Left ventricle myocardium superior (tissue), 1 donor: ENCODE measurements at regions of chr4 and their contacts with region 1.

Region 1: GRCh38 chr4:152385551-152385950 is 150.3 kb downstream of the FBXW7 start:
- DNase-seq: no peak
- ATAC-seq: peak; percentile 25

Region 2: DNA sequence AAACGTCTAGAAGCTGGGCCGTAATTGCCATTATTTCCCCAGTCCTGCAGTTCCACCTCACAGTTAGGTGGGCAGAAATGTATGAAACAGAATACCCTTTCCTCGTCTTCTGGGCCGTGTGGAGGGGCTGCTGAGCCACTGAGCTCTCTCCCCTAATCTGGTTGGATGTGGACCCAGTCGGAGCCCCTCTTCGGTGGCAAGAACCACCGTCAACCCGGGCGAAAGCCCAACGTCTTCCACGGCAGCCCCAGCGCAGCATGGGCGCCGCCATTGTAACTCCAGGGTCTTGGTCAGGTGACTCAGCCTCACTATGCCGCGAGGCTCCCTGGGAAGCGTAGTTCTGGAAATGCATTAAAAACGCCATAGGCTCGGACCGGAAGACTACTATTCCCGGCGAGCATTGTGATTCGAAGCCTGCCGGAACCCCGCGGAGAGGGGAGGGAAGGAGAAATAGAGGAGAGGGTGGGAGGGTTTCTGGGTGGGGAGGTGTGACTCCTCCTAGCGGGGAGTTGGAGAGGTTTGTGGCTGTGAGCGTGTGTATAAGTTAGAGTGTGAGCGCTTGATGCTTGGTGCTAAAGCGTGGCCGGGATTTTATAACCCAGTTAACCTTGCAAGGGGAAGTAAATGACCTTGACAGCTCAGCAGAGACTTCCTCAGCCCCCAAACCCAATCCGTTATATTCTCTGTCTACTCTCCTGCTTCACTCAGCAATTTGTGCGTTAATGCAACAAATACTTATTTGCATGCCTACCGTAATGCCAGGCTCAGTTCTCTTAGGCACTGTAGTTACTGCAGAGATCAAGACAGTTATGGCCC is 624.6 kb before region 1 on chr4 and contains the start of gene GATB:
- intact Hi-C with region 1: loop called (anchors 10 kb)
- DNase-seq: peak; percentile 92
- ATAC-seq: peak; percentile 100
- total RNA-seq, gene GATB: 142 TPM

Region 3: GRCh38 chr4:152132776-152133175 is 252.8 kb before region 1 on chr4:
- intact Hi-C with region 1: no loop called
- DNase-seq: no peak
- ATAC-seq: no peak